ENCODE measurements at regions of chr22 and their contacts with region 1.

Region 1: DNA sequence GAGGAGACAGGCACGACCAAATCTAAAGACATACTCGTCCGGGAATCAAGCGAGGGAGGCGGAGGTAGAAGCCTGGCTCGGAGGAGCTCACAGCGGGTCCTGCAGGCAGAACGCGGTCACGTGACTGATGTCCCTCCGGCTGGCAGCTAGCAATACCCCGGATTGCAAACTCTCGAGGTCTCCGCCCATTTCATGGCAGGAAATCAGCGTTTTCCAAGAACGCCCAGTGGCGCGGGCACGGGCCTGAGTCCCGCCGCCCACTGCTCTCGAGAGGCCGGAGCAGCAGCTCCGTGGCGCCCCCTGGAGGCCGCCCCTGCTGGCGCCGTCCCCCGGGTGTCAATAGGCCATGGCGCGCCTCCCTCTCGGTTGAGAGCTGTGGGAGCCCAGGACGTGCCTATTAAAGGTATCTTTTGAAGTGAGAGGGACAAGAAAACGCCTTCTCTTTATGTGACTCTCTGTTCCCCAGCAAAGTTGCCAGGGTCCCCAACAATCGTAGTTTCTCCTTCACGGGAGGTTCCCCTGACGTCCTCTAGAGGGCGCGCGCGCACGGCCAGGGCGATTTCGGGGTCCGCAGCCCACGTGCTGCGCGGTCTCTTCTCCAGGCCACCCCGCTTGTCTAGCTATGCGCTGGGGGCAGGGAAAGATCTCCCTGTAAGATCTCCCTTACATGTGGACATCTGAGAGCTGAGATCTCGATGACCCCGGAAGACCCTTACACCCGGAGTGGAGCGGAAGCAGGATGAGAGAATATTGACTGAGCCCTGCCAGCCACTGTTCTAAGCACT is 37.3 kb upstream of the RBFOX2 start:
- DNase-seq: peak; percentile 93
- ATAC-seq: peak; percentile 95

Region 2: DNA sequence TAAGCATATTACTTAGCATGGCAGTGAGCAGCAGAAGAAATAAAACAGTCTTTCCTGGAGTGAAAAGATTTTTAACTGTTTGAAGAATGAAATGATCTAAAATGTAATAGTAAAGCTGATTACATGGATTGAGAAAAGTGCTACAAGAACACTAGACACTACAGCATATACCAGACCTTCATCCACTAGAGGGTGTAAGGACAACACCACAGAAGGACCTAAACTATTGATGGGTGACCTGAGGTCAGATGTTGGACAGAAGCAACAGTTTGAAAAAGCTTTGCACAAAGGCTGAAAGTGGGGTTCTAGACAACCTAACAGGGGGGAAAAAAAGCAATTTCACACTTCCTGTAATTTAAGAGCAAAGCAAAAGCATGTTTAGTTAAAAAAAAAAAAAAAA is 135.0 kb before region 1 on chr22:
- intact Hi-C with region 1: loop called (anchors 5 kb)
- DNase-seq: no peak
- ATAC-seq: peak; percentile 96

Region 3: GRCh38 chr22:36134182-36134581 is 68.2 kb after region 1 on chr22:
- intact Hi-C with region 1: no loop called
- DNase-seq: no peak
- ATAC-seq: no peak

Region 4: DNA sequence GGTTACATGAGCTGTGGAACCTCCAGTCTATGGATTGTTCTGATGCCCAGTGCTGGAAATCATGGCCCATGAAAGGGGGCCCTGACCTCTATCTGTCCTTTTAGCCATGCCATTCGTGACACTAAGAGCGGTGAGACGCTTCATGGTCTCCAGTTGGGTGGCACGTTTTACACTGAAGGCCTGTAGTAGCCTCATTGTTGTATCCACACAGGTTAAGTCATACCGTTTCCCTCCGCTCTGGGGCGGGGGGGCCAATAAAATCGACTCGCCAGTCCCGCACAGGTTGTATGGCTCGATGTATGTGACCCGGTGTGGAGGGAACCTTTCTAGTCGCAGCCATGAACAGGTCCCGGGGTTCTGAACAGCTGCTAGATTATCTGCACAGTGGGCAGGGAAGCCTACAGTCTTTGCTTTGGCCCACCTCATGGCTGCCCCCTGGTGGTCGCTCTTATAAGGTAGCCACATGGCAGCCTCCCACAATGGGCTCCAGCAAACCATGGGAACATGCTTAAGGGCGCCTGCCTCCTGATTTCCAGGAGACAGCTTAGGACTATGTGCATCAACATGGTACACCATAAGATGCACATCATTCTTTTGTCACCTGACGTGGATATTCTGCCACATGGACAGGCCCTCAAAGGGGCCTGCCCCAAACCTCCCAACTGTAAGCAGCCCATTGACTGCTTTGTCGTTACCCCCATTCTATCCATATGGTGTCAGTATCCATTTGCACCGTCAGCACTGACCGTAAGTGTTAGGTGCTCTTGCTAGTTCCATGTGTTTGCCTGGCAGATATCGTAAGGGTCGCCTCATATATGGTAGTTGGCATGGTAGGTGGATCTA is 114.3 kb after region 1 on chr22:
- intact Hi-C with region 1: loop called (anchors 2 kb)
- DNase-seq: peak; percentile 94
- ATAC-seq: peak; percentile 95